ENCODE measurements at regions of chr18 and their contacts with region 1.

Region 1: GRCh38 chr18:46677611-46678010 is 20.6 kb upstream of the LOXHD1 start:
- DNase-seq: no peak
- H3K4me3 ChIP-seq: no peak overlapping the region
- H3K27ac ChIP-seq: no peak overlapping the region
- H3K4me1 ChIP-seq: peaks cover 8% of the 10 kb centered on the region
- H3K27me3 ChIP-seq: no peaks in the 10 kb centered on the region
- CTCF ChIP-seq: peak in 1 of 2 donors; percentile 11
- POLR2A ChIP-seq: no peak

Region 2: GRCh38 chr18:46718501-46719341 is 41.1 kb after region 1 on chr18:
- CTCF ChIA-PET with region 1: no interaction called
- POLR2A ChIA-PET with region 1: no interaction called
- dilution Hi-C with region 1: no loop called
- intact Hi-C with region 1: loop called (anchors 2 kb)
- DNase-seq: peak; percentile 89
- H3K4me3 ChIP-seq: peak overlapping the region in 1 of 3 experiments; percentile 28
- H3K27ac ChIP-seq: peak overlapping the region; percentile 54
- H3K4me1 ChIP-seq: peaks cover 18% of the 10 kb centered on the region
- H3K27me3 ChIP-seq: peaks cover 3 to 5% of the 10 kb centered on the region in 2 experiments
- CTCF ChIP-seq: no peak
- POLR2A ChIP-seq: no peak